Calu3 (cell line): ENCODE measurements at regions of chr10 and their contacts with region 1.

Region 1: DNA sequence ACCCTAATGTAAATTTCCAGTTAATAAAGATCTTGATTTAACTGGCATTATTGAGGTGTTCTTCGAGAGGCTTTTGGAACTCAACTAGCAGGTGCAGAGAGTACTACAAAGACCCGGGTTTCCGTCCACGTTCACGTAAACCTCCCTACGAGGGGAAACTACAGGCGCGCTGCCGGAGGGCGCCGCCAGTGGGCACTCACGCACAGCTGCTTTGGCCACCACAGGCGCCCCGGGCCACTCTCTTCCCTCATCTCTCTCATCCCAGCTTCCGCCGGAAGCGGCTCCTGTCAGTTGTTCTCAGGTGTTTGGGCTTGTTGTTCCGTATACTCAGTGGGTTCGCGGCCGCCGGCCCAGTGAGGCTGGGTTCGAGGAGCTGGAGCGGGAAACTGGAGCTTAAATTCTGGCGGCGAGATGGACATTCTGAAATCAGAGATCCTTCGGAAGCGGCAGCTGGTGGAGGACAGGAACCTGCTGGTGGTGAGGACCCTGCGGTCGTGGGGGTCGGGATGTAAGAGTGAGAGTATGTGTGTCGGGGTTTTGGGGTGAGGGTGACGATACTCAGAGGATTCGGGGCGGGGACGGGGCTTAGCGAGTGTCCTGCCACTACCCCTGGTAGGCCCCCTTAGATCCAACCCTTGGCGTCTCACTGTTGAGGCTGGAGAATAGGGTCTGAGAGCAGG is at the start of gene PRPF18:
- DNase-seq: peak; percentile 95
- H3K4me3 Mint-ChIP-seq: peak within 1 kb of the TSS; percentile 97
- H3K27ac Mint-ChIP-seq: peak within 1 kb of the TSS; percentile 92
- H3K4me1 Mint-ChIP-seq: no peaks in the 10 kb centered on the region
- H3K27me3 Mint-ChIP-seq: peaks cover 8% of the 10 kb centered on the region
- CTCF ChIP-seq: peak; percentile 89
- total RNA-seq, gene PRPF18: 19.9 and 21.3 TPM in 2 replicates

Region 2: DNA sequence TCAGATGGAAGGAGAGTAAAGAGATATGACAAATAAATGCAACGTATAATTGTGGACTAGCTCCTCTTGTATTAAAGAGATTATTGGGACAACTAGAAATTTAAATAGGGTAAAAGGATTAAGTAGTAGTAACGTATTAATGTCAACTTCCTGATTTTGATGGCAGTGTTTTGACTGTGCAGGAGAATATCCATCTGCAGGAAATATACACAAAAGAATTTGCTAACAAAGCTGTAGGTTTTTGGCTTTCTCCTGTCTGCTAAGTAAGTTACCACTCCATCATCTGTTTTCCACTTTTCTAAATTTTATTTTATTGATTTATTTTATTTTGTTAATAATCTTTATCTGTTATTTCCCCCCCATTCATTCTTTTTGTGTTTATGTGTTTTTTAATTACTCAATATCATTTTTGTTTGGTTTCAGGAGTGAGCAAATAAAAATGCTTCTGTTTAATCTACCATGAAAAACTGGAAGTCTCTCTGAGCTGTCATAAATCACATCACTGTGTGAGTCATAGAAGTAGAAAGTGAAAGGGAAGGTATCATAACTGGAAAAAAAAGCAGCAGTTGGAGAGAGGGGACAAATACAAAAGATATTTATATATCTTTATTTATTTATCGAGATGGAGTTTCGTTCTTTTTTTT is 30.0 kb before region 1 on chr10:
- CTCF ChIA-PET with region 1: no interaction called
- intact Hi-C with region 1: loop called (anchors 1 kb)
- DNase-seq: no peak
- H3K4me3 Mint-ChIP-seq: no peak overlapping the region
- H3K27ac Mint-ChIP-seq: no peak overlapping the region
- H3K4me1 Mint-ChIP-seq: no peaks in the 10 kb centered on the region
- H3K27me3 Mint-ChIP-seq: peaks cover 20% of the 10 kb centered on the region
- CTCF ChIP-seq: no peak

Region 3: GRCh38 chr10:13684252-13684791 is 97.5 kb after region 1 on chr10:
- CTCF ChIA-PET with region 1: no interaction called
- intact Hi-C with region 1: no loop called
- DNase-seq: no peak
- H3K4me3 Mint-ChIP-seq: no peak overlapping the region
- H3K27ac Mint-ChIP-seq: no peak overlapping the region
- H3K4me1 Mint-ChIP-seq: peaks cover 9% of the 10 kb centered on the region
- H3K27me3 Mint-ChIP-seq: no peaks in the 10 kb centered on the region
- CTCF ChIP-seq: no peak